K562 (cell line): ENCODE measurements at regions of chr6 and their contacts with region 1.

Region 1: DNA sequence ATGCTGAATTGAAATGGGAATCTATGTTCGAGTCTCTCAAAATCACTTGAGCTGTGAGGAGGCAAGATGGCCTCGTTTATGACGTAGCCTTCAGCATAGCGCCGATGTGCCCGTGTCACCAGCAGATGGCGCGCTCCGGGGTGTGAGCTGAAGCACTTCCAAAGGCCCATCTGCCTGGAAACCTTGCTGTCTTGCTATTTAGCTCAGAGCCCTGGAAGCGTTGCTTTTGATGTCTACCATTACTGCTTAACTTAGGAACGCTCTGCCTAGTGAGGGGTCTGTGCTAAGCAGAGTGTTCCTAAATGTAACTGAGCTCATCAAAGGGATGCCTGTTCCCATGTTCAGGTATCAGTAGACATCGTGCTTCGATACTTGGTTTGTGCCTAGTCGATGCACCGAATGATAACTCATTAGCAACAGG is 67.7 kb downstream of the SYCP2L start:
- DNase-seq: peak; percentile 76 to 85 (median 80)
- ATAC-seq: peak; percentile 100
- H3K4me3 ChIP-seq: no peak overlapping the region
- H3K27ac ChIP-seq: no peak overlapping the region
- H3K4me1 ChIP-seq: no peaks in the 10 kb centered on the region; a peak in 1 of 5 replicates
- H3K27me3 ChIP-seq: no peaks in the 10 kb centered on the region
- CTCF ChIP-seq: peak; percentile 90 to 97 (median 95)
- EP300 ChIP-seq: no peak
- POLR2A ChIP-seq: 0 out of 2 replicates have a peak, but pooled peaks have one; percentile 17
- RAD21 ChIP-seq: peak; percentile 66 to 74

Region 2: GRCh38 chr6:10048370-10049298 is 906.0 kb before region 1 on chr6:
- CTCF ChIA-PET with region 1: no interaction called
- POLR2A ChIA-PET with region 1: no interaction called
- in situ Hi-C with region 1: no loop called
- intact Hi-C with region 1: no loop called
- DNase-seq: no peak
- ATAC-seq: no peak
- H3K4me3 ChIP-seq: no peak overlapping the region
- H3K27ac ChIP-seq: no peak overlapping the region
- H3K4me1 ChIP-seq: no peaks in the 10 kb centered on the region
- H3K27me3 ChIP-seq: no peaks in the 10 kb centered on the region
- CTCF ChIP-seq: no peak
- EP300 ChIP-seq: no peak
- POLR2A ChIP-seq: no peak
- RAD21 ChIP-seq: no peak

Region 3: DNA sequence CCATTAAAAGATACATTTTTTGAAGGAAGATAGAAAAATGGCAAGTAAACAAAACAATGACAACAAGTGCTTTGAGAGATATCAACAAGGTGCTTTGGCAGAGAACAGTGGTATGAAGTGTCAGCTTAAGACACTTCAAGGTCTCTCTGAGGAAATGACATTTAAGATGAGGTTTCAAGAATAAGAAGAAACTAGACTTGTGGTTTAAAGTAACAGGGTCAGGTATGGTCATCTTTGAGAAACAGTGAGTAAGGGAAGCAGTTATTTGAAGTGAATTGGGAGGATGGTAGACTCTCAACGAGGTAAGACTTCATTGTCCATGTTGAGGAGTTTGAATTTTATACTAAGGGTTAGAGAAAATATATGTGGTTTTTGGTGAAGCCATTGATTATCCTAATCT is 10.1 kb after region 1 on chr6:
- CTCF ChIA-PET with region 1: no interaction called
- POLR2A ChIA-PET with region 1: no interaction called
- in situ Hi-C with region 1: no loop called
- intact Hi-C with region 1: no loop called
- DNase-seq: no peak
- ATAC-seq: no peak
- H3K4me3 ChIP-seq: no peak overlapping the region
- H3K27ac ChIP-seq: no peak overlapping the region
- H3K4me1 ChIP-seq: no peaks in the 10 kb centered on the region
- H3K27me3 ChIP-seq: no peaks in the 10 kb centered on the region
- CTCF ChIP-seq: no peak
- EP300 ChIP-seq: no peak
- POLR2A ChIP-seq: no peak
- RAD21 ChIP-seq: no peak

Region 4: DNA sequence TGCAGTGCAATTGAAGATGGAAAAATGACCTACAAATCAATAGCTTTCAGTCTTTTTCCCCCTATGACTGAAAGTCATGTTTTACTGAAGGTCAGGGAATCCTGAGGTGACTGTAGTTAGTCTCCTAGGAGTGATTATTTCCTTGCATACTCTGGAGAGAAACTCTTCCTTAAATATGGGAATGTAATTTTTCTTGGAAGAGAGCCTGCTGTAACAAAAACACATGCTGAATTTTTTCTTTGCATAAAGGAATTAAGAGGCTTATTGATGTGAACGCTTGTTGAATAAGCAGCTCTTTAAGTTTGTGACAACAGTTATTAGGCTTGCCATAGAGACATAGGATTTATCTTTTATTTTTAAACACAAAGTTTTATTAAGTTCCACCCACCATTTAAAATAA is 25.0 kb after region 1 on chr6:
- CTCF ChIA-PET with region 1: no interaction called
- POLR2A ChIA-PET with region 1: no interaction called
- in situ Hi-C with region 1: no loop called
- intact Hi-C with region 1: no loop called
- DNase-seq: no peak
- ATAC-seq: no peak
- H3K4me3 ChIP-seq: no peak overlapping the region
- H3K27ac ChIP-seq: no peak overlapping the region
- H3K4me1 ChIP-seq: no peaks in the 10 kb centered on the region
- H3K27me3 ChIP-seq: no peaks in the 10 kb centered on the region
- CTCF ChIP-seq: no peak
- EP300 ChIP-seq: no peak
- POLR2A ChIP-seq: no peak
- RAD21 ChIP-seq: no peak

Region 5: DNA sequence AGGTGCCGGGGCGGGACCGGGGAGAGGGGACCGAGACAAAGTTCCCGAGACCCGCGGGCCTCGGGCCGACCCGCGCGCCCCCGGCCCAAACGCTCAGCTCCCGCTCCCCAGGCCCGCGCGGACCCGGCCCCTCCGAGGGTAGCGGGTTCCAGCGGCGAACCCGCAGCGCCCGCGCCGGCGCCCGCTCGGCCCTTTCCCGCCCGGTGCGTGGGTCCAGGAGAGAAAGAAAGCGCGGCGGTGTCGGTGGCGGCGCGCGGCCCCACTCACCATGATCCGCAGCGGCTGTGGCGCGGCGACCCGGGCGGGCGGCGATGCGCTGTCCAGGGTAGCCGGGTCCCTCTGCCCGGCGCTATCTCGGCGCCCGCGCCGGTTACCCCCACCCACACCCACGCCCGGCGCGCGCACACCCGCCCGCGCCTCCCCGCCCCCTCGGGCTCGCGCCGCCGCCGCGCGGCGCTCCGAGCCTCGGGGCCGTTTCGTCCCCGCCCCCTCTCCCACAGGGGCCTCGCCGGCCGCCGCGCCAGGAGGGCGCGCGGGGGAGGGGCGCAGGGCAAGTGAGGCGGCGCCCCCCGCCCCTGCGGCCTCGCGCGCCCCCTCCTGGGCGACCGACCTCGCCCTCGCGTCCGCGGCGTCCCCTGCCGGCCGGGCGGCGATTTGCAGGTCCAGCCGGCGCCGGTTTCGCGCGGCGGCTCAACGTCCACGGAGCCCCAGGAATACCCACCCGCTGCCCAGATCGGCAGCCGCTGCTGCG is 89.5 kb after region 1 on chr6 and contains the start of gene ELOVL2:
- CTCF ChIA-PET with region 1: interaction called, 8 read pairs
- POLR2A ChIA-PET with region 1: no interaction called
- in situ Hi-C with region 1: no loop called
- intact Hi-C with region 1: loop called (anchors 1 kb)
- DNase-seq: peak; percentile 72 to 96 (median 90)
- ATAC-seq: peak; percentile 89
- H3K4me3 ChIP-seq: peak within 1 kb of the TSS; percentile 43
- H3K27ac ChIP-seq: no peak within 1 kb of the TSS
- H3K4me1 ChIP-seq: peaks cover 0 to 18% of the 10 kb centered on the region in 2 experiments; a peak in 2 of 5 replicates
- H3K27me3 ChIP-seq: peaks cover 33% of the 10 kb centered on the region in 2 experiments
- CTCF ChIP-seq: peak; percentile 82 to 99 (median 99)
- EP300 ChIP-seq: no peak
- POLR2A ChIP-seq: no peak
- RAD21 ChIP-seq: peak; percentile 46 to 84
- polyA plus RNA-seq, gene ELOVL2: 0.14 to 0.20 TPM

Region 6: GRCh38 chr6:11064836-11065235 is 110.2 kb after region 1 on chr6:
- CTCF ChIA-PET with region 1: interaction called, 9 read pairs
- POLR2A ChIA-PET with region 1: no interaction called
- in situ Hi-C with region 1: loop called (anchors 5 kb)
- intact Hi-C with region 1: loop called (anchors 1 kb)
- DNase-seq: no peak
- ATAC-seq: no peak
- H3K4me3 ChIP-seq: no peak overlapping the region
- H3K27ac ChIP-seq: no peak overlapping the region
- H3K4me1 ChIP-seq: peaks cover 3% of the 10 kb centered on the region in 2 experiments; a peak in 3 of 5 replicates
- H3K27me3 ChIP-seq: peaks cover 0 to 2% of the 10 kb centered on the region in 2 experiments; a peak in 1 of 5 replicates
- CTCF ChIP-seq: no peak
- EP300 ChIP-seq: no peak
- POLR2A ChIP-seq: no peak
- RAD21 ChIP-seq: no peak

Region 7: DNA sequence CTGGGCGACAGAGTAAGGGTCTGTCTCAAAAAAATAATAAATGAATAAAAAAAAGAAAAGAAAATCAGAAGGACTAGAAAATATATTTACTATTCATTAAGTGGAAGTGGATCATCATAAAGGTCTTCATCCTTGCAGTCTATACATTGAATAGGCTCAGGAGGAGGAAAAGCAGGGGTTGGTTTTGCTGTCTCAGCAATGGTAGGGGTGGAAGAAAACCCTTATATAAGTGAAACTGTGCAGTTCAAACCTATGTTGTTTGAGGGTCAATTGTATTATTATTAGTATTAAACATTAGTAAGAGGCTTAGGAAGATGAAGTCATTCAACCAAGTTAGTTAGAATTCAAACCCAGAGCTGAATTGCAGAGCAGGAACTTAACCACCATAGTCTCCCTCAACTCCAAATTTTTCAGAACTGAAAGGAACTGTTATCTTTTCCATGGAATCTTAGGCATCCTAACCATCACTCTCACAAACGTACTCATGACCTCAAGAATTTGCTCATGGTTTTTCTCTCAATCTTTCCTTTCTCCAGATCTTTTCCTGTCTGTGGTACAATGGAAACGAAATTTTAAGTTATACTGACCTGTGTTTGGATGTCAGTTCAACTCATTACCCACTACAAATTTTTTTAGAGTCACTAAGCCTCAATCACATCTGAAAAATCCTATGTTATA is 131.3 kb after region 1 on chr6:
- CTCF ChIA-PET with region 1: no interaction called
- POLR2A ChIA-PET with region 1: no interaction called
- in situ Hi-C with region 1: no loop called
- intact Hi-C with region 1: no loop called
- DNase-seq: no peak
- ATAC-seq: no peak
- H3K4me3 ChIP-seq: no peak overlapping the region
- H3K27ac ChIP-seq: no peak overlapping the region
- H3K4me1 ChIP-seq: no peaks in the 10 kb centered on the region
- H3K27me3 ChIP-seq: no peaks in the 10 kb centered on the region
- CTCF ChIP-seq: no peak
- EP300 ChIP-seq: no peak
- POLR2A ChIP-seq: no peak
- RAD21 ChIP-seq: no peak

Region 8: DNA sequence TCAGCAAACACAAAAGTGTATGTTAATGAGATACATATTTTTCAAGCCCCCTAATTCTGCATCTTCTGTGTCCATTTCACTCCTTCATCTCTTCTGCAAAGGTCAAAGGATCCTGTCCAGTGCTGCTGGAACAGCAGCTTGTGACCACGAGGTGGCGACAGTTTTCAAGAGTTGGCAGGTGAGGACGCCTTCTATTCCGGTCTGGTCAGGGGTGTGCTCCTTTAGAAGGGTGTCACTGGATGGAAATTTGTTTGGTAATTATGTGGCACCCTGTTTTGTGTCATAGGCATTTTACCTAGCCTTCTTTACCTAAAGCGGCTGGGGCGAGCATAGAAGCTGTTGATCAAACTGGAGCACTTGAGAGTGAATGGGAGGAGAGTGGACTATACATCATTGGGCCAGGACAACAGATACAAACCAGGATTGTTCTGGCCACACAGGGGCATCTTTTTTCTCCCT is 189.8 kb after region 1 on chr6:
- CTCF ChIA-PET with region 1: interaction called, 4 read pairs
- POLR2A ChIA-PET with region 1: no interaction called
- in situ Hi-C with region 1: no loop called
- intact Hi-C with region 1: loop called (anchors 10 kb)
- DNase-seq: peak; percentile 81 to 88 (median 82)
- ATAC-seq: peak; percentile 97
- H3K4me3 ChIP-seq: no peak overlapping the region
- H3K27ac ChIP-seq: no peak overlapping the region
- H3K4me1 ChIP-seq: peaks cover 0 to 8% of the 10 kb centered on the region in 2 experiments; a peak in 3 of 5 replicates
- H3K27me3 ChIP-seq: peaks cover 0 to 17% of the 10 kb centered on the region in 2 experiments; a peak in 2 of 5 replicates
- CTCF ChIP-seq: peak; percentile 89 to 97 (median 96)
- EP300 ChIP-seq: no peak
- POLR2A ChIP-seq: no peak
- RAD21 ChIP-seq: peak; percentile 91 to 92